Transverse colon (tissue), 4 donors: ENCODE measurements at regions of chr5 and their contacts with region 1.

Region 1: DNA sequence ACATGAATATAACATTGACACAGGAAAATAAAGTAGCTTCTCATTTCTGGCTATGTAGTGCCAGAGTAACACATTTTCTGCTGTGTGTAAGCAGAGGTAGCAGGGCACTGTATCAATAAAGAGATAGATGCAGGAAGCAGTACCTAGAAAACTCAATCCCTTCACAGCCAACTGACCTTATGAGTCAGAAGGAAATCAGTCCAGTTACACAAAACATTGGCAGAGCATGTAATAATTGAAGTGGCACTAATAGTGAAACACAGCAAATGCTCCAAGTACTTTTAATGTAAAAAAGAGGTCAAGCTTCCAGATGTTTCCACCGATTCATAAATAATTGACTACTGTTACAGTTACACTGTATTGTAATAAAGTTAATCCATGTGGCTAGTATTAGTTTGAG is 706.6 kb downstream of the EFNA5 start:
- DNase-seq: no peak
- H3K4me3 ChIP-seq: no peak overlapping the region
- H3K27ac ChIP-seq: no peak overlapping the region
- H3K4me1 ChIP-seq: no peaks in the 10 kb centered on the region
- H3K27me3 ChIP-seq: no peaks in the 10 kb centered on the region
- CTCF ChIP-seq: no peak
- EP300 ChIP-seq: no peak
- POLR2A ChIP-seq: no peak

Region 2: GRCh38 chr5:105207066-105207465 is 1757.1 kb before region 1 on chr5:
- in situ Hi-C with region 1: no loop called
- intact Hi-C with region 1: loop called (anchors 5 kb)
- DNase-seq: no peak
- H3K4me3 ChIP-seq: no peak overlapping the region
- H3K27ac ChIP-seq: no peak overlapping the region
- H3K4me1 ChIP-seq: no peaks in the 10 kb centered on the region
- H3K27me3 ChIP-seq: no peaks in the 10 kb centered on the region
- CTCF ChIP-seq: no peak
- EP300 ChIP-seq: no peak
- POLR2A ChIP-seq: no peak

Region 3: DNA sequence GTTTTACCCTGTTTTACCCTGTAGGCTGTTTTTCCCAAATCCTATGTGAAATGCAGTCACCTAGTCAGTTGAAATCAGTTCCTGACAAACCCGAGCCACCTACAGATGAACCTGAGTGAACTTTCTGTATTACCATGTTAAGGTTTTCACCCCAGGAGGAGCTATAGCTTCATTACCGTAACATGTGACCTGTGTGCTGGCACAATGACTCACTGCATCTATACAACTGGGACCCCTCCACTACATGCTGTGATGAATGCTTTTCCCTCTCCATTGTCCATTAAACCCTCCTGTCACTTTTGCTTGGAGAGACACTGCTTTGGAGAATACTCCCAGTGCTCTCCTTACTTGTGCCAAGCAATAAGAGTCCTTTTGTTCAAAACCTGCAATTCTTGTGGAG is 1268.2 kb before region 1 on chr5:
- in situ Hi-C with region 1: no loop called
- intact Hi-C with region 1: no loop called
- DNase-seq: no peak
- H3K4me3 ChIP-seq: no peak overlapping the region
- H3K27ac ChIP-seq: no peak overlapping the region
- H3K4me1 ChIP-seq: no peaks in the 10 kb centered on the region
- H3K27me3 ChIP-seq: no peaks in the 10 kb centered on the region
- CTCF ChIP-seq: no peak
- EP300 ChIP-seq: no peak
- POLR2A ChIP-seq: no peak

Region 4: DNA sequence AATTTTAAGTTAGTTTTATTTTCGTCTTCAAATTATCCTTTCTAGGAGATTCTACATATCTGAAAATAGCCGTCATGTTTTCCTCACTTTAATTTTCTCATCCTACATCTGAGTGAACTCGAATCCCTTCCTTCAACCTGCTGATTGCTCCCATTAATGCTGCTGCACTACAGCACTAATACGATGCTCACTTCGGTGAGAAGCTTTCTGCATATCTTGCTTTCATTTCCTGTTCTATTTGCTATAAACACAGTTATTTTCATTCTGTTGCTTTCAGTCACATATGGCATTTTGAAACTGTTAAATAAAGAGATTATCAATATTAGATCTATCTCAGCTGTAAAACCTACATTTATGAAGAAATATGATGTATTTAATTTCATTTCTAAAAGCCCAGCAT is 42.6 kb before region 1 on chr5:
- in situ Hi-C with region 1: no loop called
- intact Hi-C with region 1: no loop called
- DNase-seq: no peak
- H3K4me3 ChIP-seq: no peak overlapping the region
- H3K27ac ChIP-seq: no peak overlapping the region
- H3K4me1 ChIP-seq: no peaks in the 10 kb centered on the region
- H3K27me3 ChIP-seq: no peaks in the 10 kb centered on the region
- CTCF ChIP-seq: no peak
- EP300 ChIP-seq: no peak
- POLR2A ChIP-seq: no peak

Region 5: GRCh38 chr5:107604832-107605389 is 640.8 kb after region 1 on chr5:
- in situ Hi-C with region 1: loop called in 1 of 4 experiments (anchors 25 kb)
- intact Hi-C with region 1: no loop called
- DNase-seq: no peak
- H3K4me3 ChIP-seq: no peak overlapping the region
- H3K27ac ChIP-seq: no peak overlapping the region
- H3K4me1 ChIP-seq: peaks cover 0 to 15% (median 10%) of the 10 kb centered on the region in 4 donors
- H3K27me3 ChIP-seq: no peaks in the 10 kb centered on the region
- CTCF ChIP-seq: no peak
- EP300 ChIP-seq: no peak
- POLR2A ChIP-seq: no peak